Common myeloid progenitor, CD34-positive (primary cell): ENCODE measurements at regions of chr20 and their contacts with region 1.

Region 1: DNA sequence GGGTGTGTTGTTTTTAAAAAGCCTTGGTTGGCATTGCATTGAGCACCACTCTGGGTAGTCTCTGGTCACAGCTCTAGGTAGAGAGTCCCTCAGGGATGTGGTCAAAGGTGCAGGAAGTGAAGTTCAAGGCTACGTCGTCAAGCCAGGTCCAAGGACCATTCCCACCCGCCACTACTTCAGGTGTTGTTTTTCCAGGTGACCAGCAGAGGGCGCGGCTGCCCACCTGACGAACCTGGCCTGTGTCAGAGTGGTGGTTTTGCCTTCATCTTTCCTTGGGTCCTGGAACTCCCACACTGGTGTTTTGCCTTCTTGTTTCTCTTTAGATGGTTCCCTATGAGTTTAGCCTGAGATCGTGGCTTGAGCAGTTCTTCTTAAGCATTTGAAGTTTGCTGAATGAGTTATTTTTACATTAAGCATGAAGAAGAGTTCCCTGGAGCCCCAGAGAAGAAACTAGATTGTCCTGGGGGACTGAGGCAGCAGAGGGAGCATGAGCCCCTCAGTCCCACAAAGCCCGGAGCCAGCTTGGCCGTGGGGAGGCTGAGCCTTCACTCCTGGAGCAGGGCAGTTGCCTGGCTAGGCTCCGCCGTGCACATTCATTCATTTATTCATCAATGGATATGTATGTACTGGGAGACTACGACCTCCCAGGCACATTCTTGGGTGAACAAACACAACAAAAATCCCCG is 5.6 kb upstream of the PHACTR3 start:
- DNase-seq: peak; percentile 6 to 43 (median 36)
- H3K4me3 ChIP-seq: no peak overlapping the region
- H3K27ac ChIP-seq: no peak overlapping the region
- H3K4me1 ChIP-seq: no peaks in the 10 kb centered on the region
- H3K27me3 ChIP-seq: peaks cover 0 to 57% (median 14%) of the 10 kb centered on the region in 5 experiments

Region 2: DNA sequence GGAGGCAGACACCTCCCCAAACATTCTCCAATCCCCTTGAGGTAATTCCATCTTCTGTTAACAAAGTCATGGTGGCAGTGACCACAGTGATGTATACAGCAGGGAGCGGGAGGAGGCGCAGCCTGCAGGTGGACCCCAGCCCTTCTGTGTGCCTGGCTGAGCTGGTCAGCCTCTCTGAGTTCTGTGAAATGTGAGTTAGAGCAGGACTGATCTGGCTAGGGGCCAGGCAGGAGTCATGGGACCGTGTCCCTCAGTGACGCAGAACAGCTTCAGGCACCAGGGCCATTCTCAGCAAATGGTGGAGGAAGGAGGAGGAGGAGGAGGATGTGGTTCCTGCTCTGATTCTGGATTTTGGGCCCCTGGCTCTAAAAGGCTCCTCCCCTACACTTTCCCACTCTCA is 12.5 kb after region 1 on chr20:
- CTCF ChIA-PET with region 1: interaction called, 18 read pairs
- POLR2A ChIA-PET with region 1: no interaction called
- DNase-seq: no peak
- H3K4me3 ChIP-seq: no peak overlapping the region
- H3K27ac ChIP-seq: no peak overlapping the region
- H3K4me1 ChIP-seq: no peaks in the 10 kb centered on the region
- H3K27me3 ChIP-seq: peaks cover 0 to 42% (median 20%) of the 10 kb centered on the region in 5 experiments

Region 3: DNA sequence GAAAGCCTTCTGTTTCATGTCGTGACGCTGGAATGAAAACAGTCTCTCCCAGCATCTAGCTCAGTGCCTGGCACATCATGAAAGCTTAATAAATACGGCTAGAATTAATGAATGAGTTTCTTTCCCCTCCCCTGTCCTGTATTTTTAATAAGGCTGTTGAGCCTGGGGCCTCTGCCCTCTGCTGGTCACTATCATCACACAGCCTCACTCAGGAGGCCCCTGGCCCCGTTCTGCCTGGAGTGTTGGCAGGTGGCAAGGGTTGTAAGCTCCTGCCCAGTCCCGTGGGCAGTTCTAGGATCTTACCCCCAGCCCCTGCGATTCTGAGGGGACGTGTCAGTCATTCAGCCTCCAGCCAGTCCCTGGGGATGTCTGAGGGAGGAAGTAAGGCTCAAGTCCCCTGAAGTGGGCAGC is 47.0 kb after region 1 on chr20:
- CTCF ChIA-PET with region 1: no interaction called
- POLR2A ChIA-PET with region 1: no interaction called
- DNase-seq: no peak
- H3K4me3 ChIP-seq: no peak overlapping the region
- H3K27ac ChIP-seq: no peak overlapping the region
- H3K4me1 ChIP-seq: no peaks in the 10 kb centered on the region
- H3K27me3 ChIP-seq: peaks cover 0 to 9% (median 3%) of the 10 kb centered on the region in 5 experiments

Region 4: DNA sequence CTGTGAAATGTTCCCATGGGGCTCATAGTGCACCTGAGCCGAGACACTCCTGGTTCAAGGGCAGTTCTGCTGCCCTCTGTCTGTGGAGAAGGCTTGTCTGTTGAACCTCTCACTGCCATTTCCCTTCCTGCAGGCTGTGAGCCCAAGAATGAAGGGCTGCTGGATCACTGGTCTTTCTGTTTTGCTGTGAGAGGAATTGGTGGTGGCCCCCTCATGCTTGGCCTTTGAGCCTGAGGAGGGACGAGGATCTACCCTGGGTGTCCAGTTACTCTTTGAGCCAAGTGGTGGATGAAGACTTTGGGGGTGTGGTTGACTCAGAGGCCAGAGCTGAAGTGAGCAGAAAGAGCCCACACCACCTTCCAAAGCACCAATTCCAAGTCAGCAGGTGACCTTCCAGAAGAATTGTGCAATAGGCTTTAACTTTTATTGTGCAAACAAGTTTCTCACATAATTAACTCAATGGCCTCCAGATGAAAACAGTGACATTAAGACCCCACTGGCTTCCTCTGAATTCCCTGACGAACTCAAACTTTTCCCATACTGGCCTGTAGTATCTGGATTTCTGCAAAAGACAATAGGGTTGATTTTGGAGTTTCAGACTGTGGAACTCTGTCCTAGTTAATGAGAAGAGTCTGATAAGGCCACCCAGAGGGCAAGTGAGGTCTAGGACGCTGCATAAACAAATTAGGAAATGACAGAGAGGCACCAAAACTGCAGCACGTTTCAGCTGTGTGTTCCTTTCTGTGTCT is 107.1 kb after region 1 on chr20:
- CTCF ChIA-PET with region 1: no interaction called
- POLR2A ChIA-PET with region 1: no interaction called
- DNase-seq: no peak
- H3K4me3 ChIP-seq: no peak overlapping the region
- H3K27ac ChIP-seq: no peak overlapping the region
- H3K4me1 ChIP-seq: no peaks in the 10 kb centered on the region
- H3K27me3 ChIP-seq: peaks cover 0 to 38% (median 5%) of the 10 kb centered on the region in 5 experiments

Region 5: DNA sequence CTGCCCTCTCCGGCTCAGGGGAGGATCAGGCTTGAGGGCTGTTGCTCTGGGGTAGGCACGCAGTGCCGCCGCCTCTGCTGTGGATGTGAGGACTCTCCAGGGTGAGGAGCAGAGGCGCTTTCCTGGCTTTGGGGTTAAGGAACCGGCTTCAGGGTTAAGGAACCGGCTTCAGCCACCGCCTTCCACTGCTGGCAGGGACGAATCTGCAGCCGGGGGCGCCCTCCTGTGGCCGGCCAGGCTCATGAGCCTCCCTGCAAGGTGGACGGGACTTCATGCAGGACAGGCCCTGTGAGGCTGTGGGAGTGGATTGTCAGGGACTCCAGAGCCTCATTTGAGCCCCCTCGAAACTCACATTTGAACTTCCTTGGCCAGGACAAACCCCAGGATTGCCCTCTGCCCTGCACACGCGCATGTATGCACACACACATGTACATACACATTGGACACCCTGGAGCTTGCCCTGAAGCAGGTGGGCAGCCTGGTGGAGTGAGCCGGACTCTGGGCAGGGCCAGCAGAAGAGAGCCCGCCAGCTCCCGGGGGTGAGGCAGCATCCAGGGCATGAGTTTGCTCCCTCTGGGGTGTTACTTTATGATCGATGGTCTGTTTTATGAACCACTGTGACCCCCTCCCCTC is 152.4 kb after region 1 on chr20:
- CTCF ChIA-PET with region 1: interaction called, 22 read pairs
- POLR2A ChIA-PET with region 1: no interaction called
- DNase-seq: peak; percentile 40 to 68 (median 62)
- H3K4me3 ChIP-seq: no peak overlapping the region
- H3K27ac ChIP-seq: no peak overlapping the region
- H3K4me1 ChIP-seq: peaks cover 0 to 13% (median 7%) of the 10 kb centered on the region in 4 experiments
- H3K27me3 ChIP-seq: peaks cover 0 to 71% (median 6%) of the 10 kb centered on the region in 5 experiments